MCF 10A (cell line): ENCODE measurements at regions of chr9 and their contacts with region 1.

Region 1: DNA sequence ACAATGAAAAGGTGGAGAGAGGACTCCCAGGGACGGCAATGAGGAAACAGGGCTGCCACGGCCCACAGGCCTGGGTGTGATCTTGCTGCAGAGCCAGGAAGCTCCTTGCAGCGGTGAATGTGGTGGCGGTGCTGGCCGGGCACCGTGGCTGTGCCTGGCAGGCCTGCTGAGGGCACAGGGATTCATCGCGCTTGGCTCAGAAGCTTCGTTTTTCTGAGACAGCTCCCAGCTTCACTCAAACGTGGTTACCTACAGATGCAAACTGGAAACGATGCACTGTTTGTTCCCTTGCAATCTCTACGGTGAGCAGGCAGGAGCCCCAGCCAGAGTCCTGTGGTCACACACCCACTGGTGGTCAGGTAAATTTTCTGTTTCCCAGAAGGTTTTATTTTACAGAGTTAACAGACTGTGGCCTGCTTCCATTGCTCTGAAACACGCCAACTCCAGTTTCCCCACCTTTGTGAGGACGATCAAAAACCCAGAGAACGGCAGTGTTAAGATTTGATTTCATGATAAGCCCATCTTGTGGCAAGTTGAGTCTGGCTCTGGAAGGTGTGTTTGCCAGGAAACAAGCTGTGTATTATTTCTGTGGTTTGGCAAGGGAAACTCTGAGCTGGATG is 183.9 kb downstream of the AUH start:
- DNase-seq: peak; percentile 94
- H3K4me3 Mint-ChIP-seq: peak overlapping the region; percentile 57
- H3K27ac Mint-ChIP-seq: peak overlapping the region; percentile 89
- H3K4me1 Mint-ChIP-seq: peaks cover 50% of the 10 kb centered on the region
- H3K27me3 Mint-ChIP-seq: no peaks in the 10 kb centered on the region
- CTCF ChIP-seq: no peak

Region 2: GRCh38 chr9:91001146-91001611 is 176.6 kb before region 1 on chr9:
- CTCF ChIA-PET with region 1: no interaction called
- POLR2A ChIA-PET with region 1: interaction called, 10 read pairs
- intact Hi-C with region 1: no loop called
- DNase-seq: peak; percentile 99
- H3K4me3 Mint-ChIP-seq: no peak overlapping the region
- H3K27ac Mint-ChIP-seq: peak overlapping the region; percentile 88
- H3K4me1 Mint-ChIP-seq: peaks cover 36% of the 10 kb centered on the region
- H3K27me3 Mint-ChIP-seq: no peaks in the 10 kb centered on the region
- CTCF ChIP-seq: no peak

Region 3: DNA sequence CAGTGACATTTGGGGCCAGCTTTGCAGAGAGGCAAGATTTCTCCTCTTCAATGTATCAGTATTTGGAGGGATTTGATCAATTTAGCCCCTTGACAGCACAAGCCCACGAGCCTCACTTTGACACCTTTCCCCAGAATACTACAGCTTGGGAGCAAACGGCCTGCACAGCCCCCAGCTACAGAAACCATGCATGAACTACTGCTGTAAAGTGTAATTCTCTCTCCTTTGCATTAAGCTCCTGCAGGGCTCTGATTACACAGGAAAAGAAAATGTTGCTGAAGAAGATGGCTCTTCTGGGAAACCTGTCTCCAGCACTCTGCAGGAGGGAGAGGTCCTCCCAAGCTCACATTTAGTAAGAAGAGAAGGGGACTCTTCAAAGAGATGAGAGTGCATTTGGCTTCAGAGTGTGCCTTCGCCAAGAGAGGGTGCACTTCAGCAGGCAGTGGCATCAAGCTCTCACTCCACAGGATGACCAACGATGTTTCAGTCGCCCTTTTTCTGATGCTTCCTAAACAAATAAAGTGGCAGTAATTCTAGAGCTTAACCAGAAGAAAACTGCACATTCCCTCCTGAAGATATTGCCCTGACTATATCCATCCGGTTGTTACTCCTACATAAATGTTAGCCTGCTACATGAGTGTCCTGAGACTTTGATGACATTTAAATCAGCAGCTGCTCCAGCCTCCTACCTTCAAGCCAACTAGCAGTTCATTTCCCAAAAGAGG is 88.2 kb before region 1 on chr9:
- CTCF ChIA-PET with region 1: interaction called, 10 read pairs
- POLR2A ChIA-PET with region 1: interaction called, 3 read pairs
- intact Hi-C with region 1: no loop called
- DNase-seq: peak; percentile 67
- H3K4me3 Mint-ChIP-seq: no peak overlapping the region
- H3K27ac Mint-ChIP-seq: peak overlapping the region; percentile 12
- H3K4me1 Mint-ChIP-seq: peaks cover 21% of the 10 kb centered on the region
- H3K27me3 Mint-ChIP-seq: no peaks in the 10 kb centered on the region
- CTCF ChIP-seq: peak; percentile 51

Region 4: DNA sequence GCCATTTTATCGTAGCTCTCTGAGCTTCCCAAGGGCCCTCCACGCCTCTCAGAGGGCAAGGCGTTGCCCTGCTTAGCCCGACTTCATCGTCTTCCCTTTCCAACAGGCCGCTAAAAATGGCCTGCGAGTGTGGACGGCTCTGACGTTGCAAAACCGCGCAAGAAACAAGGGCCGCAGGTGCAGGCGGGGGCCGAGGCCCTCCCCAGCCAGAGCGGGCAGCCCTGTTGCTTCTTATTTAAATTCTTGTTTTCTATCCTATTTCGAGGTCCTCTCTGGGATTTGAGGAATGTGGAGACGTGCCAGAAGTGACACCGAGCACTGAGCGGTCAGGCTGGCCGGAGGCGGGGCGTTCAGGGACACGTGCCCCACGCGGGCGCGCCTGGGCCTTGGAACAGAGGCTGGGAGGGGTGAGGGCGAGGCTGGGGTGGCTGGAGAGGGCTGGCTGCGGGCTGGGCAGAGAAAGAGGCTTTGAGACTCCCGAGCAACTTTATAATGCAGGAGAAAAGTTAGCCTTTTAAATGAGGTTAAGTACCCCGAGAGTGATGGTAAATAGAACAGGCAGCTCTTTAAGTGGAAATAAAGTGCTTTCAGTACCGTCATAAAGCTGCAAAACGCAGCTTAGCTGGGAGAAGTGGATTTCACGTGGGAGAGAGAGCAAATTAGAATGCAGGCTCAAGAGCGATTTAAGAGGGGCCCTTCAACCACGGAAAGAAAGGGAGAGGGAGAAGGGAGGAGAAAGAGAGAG is 59.6 kb before region 1 on chr9:
- CTCF ChIA-PET with region 1: no interaction called
- POLR2A ChIA-PET with region 1: interaction called, 13 read pairs
- intact Hi-C with region 1: no loop called
- DNase-seq: no peak
- H3K4me3 Mint-ChIP-seq: no peak overlapping the region
- H3K27ac Mint-ChIP-seq: peak overlapping the region; percentile 83
- H3K4me1 Mint-ChIP-seq: peaks cover 34% of the 10 kb centered on the region
- H3K27me3 Mint-ChIP-seq: no peaks in the 10 kb centered on the region
- CTCF ChIP-seq: no peak

Region 5: DNA sequence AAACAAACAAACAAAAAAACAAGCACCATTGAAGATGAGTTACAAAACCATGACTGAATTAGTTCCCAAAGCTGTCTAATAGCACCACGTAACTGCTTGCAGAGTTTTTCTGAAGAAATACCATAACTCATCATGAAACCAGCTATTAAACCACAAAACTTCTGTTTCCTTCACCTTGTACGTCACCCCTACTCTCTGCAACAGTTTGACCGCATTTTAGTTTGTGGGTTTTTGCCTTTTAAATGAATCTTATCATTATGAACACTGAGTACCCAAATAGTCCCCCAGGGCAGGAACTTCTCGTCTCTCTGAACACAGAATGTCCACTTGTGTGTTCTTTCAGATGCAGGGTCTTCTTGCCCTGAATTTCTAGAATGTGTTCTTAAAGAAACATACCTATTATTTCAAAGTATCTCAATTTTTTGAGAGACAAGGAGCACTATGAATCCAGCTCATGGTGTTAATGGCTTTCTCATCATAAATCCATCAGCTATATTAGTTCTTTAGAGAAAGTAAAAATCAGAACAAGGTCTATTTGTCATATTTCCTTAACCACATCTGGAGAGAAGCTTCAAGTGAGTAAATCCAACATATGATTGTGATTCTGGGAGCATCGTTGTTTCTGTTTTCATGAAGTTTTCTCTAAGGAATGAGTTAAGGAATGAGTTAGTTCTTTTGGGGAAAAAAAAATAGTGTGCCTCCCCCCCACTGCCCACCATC is 26.6 kb before region 1 on chr9:
- CTCF ChIA-PET with region 1: interaction called, 3 read pairs
- POLR2A ChIA-PET with region 1: interaction called, 14 read pairs
- intact Hi-C with region 1: no loop called
- DNase-seq: peak; percentile 86
- H3K4me3 Mint-ChIP-seq: peak overlapping the region; percentile 21
- H3K27ac Mint-ChIP-seq: peak overlapping the region; percentile 96
- H3K4me1 Mint-ChIP-seq: peaks cover 43% of the 10 kb centered on the region
- H3K27me3 Mint-ChIP-seq: no peaks in the 10 kb centered on the region
- CTCF ChIP-seq: no peak